CD4-positive, alpha-beta T cell (primary cell): ENCODE measurements at regions of chr18 and their contacts with region 1.

Region 1: DNA sequence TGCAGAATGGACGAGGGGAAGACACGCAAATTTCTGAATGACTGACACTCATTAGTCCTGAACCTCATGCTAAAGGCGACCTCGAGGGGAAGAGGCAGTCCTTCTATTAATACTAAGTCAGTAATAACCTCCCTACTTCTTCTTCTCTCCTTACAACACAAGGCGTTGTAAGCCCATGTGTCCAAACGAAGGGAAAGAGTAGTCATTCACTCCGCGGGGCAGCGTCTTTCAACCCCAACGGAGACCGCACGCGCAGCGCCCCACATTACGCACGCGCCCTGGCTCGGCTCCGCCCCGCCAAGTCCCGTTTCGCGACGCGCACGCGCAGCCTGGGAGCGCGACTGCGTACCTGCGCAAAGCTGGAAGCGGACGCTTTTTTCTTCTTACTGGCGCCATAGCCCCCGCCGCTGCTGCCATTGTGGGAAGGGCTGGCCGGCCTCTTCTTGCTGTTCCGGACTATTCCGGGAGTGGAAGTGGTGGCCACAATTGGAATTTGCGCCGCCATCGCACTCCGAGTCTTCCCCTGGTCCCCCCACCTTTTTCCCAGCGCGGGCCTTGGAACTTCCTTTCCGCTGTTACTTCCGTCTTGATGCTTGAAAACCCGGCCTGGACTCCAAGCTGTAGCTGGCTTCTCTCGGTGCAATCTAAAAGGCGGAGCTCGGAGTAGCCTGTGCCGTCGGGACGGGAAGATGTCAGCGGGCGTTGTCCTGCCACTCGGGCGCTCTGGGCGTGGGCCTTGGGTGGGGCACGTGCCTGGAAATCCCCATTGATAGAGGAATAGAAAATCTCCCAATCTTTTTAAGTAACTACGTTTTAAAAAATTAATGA is at the start of gene INO80C:
- DNase-seq: peak; percentile 83 to 98 (median 90)
- ATAC-seq: peak; percentile 88
- H3K4me3 ChIP-seq: peak within 1 kb of the TSS; percentile 85
- H3K4me3 Mint-ChIP-seq: peak within 1 kb of the TSS; percentile 98
- H3K27ac ChIP-seq: peak within 1 kb of the TSS; percentile 95 to 98
- H3K27ac Mint-ChIP-seq: peak within 1 kb of the TSS; percentile 99
- H3K4me1 ChIP-seq: peaks cover 17% of the 10 kb centered on the region
- H3K4me1 Mint-ChIP-seq: peaks cover 43% of the 10 kb centered on the region
- H3K27me3 ChIP-seq: no peaks in the 10 kb centered on the region
- H3K27me3 Mint-ChIP-seq: no peaks in the 10 kb centered on the region
- CTCF ChIP-seq: no peak
- total RNA-seq, gene INO80C: 13.0 to 16.0 TPM

Region 2: GRCh38 chr18:35040988-35041814 is 456.4 kb before region 1 on chr18 and contains the start of gene MAPRE2:
- CTCF ChIA-PET with region 1: no interaction called
- POLR2A ChIA-PET with region 1: interaction called, 9 read pairs
- intact Hi-C with region 1: loop called in 1 of 2 experiments (anchors 5 kb)
- DNase-seq: peak; percentile 98 to 100 (median 99)
- ATAC-seq: peak; percentile 76
- H3K4me3 ChIP-seq: peak within 1 kb of the TSS; percentile 94
- H3K4me3 Mint-ChIP-seq: peak within 1 kb of the TSS; percentile 90
- H3K27ac ChIP-seq: peak within 1 kb of the TSS; percentile 89 to 91
- H3K27ac Mint-ChIP-seq: peak within 1 kb of the TSS; percentile 95
- H3K4me1 ChIP-seq: peaks cover 27% of the 10 kb centered on the region
- H3K4me1 Mint-ChIP-seq: peaks cover 58% of the 10 kb centered on the region
- H3K27me3 ChIP-seq: no peaks in the 10 kb centered on the region
- H3K27me3 Mint-ChIP-seq: no peaks in the 10 kb centered on the region
- CTCF ChIP-seq: no peak
- total RNA-seq, gene MAPRE2: 108 to 112 TPM

Region 3: GRCh38 chr18:35290073-35290735 is 207.4 kb before region 1 on chr18 and contains the start of gene ZSCAN30:
- CTCF ChIA-PET with region 1: no interaction called
- POLR2A ChIA-PET with region 1: interaction called, 15 read pairs
- intact Hi-C with region 1: loop called in 1 of 2 experiments (anchors 2 kb)
- DNase-seq: peak; percentile 93 to 98 (median 96)
- ATAC-seq: peak; percentile 90
- H3K4me3 ChIP-seq: peak within 1 kb of the TSS; percentile 92
- H3K4me3 Mint-ChIP-seq: peak within 1 kb of the TSS; percentile 99
- H3K27ac ChIP-seq: peak within 1 kb of the TSS; percentile 55 to 87
- H3K27ac Mint-ChIP-seq: peak within 1 kb of the TSS; percentile 96
- H3K4me1 ChIP-seq: peaks cover 31% of the 10 kb centered on the region
- H3K4me1 Mint-ChIP-seq: peaks cover 78% of the 10 kb centered on the region
- H3K27me3 ChIP-seq: no peaks in the 10 kb centered on the region
- H3K27me3 Mint-ChIP-seq: no peaks in the 10 kb centered on the region
- CTCF ChIP-seq: no peak
- total RNA-seq, gene ZSCAN30: 9.6 to 11.6 TPM

Region 4: DNA sequence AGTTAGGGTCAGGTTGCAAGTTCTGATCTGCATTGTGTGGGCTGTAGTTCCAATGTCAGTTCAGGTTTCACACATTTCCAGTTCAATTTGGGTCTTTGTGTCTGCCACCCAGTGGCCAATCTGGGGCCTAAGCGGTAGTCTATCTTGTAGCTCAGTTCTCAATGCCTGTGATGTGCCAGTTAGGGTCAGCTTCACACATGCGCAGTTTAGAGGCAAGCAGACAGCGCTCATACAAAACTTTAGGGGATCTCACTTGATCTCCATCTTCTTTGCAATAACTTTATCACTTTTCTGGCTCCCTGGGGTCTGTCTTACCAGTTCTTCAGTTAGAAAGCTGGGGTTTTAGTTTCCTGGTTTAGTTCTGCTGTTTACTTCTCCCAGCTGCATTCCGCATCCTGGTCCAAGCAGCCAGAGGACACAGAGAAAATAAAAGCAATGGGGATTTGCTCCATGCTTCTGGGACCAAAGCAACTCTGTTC is 142.4 kb before region 1 on chr18:
- CTCF ChIA-PET with region 1: no interaction called
- POLR2A ChIA-PET with region 1: no interaction called
- intact Hi-C with region 1: no loop called
- DNase-seq: peak; percentile 39 to 85 (median 48)
- ATAC-seq: peak; percentile 95
- H3K4me3 ChIP-seq: no peak overlapping the region
- H3K4me3 Mint-ChIP-seq: no peak overlapping the region
- H3K27ac ChIP-seq: no peak overlapping the region
- H3K27ac Mint-ChIP-seq: no peak overlapping the region
- H3K4me1 ChIP-seq: no peaks in the 10 kb centered on the region
- H3K4me1 Mint-ChIP-seq: peaks cover 4% of the 10 kb centered on the region
- H3K27me3 ChIP-seq: no peaks in the 10 kb centered on the region
- H3K27me3 Mint-ChIP-seq: no peaks in the 10 kb centered on the region
- CTCF ChIP-seq: peak; percentile 68

Region 5: DNA sequence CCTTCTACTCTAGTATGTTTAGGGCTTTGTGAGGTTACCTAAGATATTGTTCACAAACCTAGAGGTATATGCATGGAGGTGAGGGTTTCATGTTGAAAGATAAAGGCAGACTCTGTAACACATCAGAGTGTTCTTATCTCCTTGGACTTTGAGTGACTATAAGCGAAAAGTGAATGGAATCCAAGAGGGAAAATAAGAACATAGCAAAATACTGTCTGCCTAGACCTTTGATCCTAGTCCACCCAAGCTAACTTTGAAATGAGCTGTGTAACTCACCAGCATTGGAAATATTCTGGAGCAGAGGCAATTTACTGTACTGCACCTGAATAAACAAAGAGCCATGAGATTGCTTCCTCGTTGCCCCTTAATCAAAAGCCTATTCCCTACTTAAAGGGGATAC is 55.7 kb after region 1 on chr18:
- CTCF ChIA-PET with region 1: no interaction called
- POLR2A ChIA-PET with region 1: no interaction called
- intact Hi-C with region 1: no loop called
- DNase-seq: no peak
- ATAC-seq: no peak
- H3K4me3 ChIP-seq: no peak overlapping the region
- H3K4me3 Mint-ChIP-seq: no peak overlapping the region
- H3K27ac ChIP-seq: no peak overlapping the region
- H3K27ac Mint-ChIP-seq: no peak overlapping the region
- H3K4me1 ChIP-seq: no peaks in the 10 kb centered on the region
- H3K4me1 Mint-ChIP-seq: no peaks in the 10 kb centered on the region
- H3K27me3 ChIP-seq: no peaks in the 10 kb centered on the region
- H3K27me3 Mint-ChIP-seq: peaks cover 6% of the 10 kb centered on the region
- CTCF ChIP-seq: no peak

Region 6: GRCh38 chr18:35972197-35973052 is 474.8 kb after region 1 on chr18 and contains the start of gene RMP24:
- CTCF ChIA-PET with region 1: no interaction called
- POLR2A ChIA-PET with region 1: interaction called, 15 read pairs
- intact Hi-C with region 1: loop called (anchors 2 to 5 kb)
- DNase-seq: peak; percentile 86 to 97 (median 92)
- ATAC-seq: peak; percentile 82
- H3K4me3 ChIP-seq: peak within 1 kb of the TSS; percentile 73
- H3K4me3 Mint-ChIP-seq: peak within 1 kb of the TSS; percentile 97
- H3K27ac ChIP-seq: peak within 1 kb of the TSS; percentile 84 to 88
- H3K27ac Mint-ChIP-seq: peak within 1 kb of the TSS; percentile 96
- H3K4me1 ChIP-seq: peaks cover 34% of the 10 kb centered on the region
- H3K4me1 Mint-ChIP-seq: peaks cover 72% of the 10 kb centered on the region
- H3K27me3 ChIP-seq: no peaks in the 10 kb centered on the region
- H3K27me3 Mint-ChIP-seq: no peaks in the 10 kb centered on the region
- CTCF ChIP-seq: no peak

Region 7: GRCh38 chr18:36129300-36130038 is 631.9 kb after region 1 on chr18 and contains the starts of genes ELP2 and SLC39A6:
- CTCF ChIA-PET with region 1: no interaction called
- POLR2A ChIA-PET with region 1: interaction called, 14 read pairs
- intact Hi-C with region 1: no loop called
- DNase-seq: peak; percentile 91 to 98 (median 94)
- ATAC-seq: peak; percentile 87
- H3K4me3 ChIP-seq: peak within 1 kb of the TSS; percentile 77
- H3K4me3 Mint-ChIP-seq: peak within 1 kb of the TSS; percentile 95
- H3K27ac ChIP-seq: peak within 1 kb of the TSS; percentile 99
- H3K27ac Mint-ChIP-seq: peak within 1 kb of the TSS; percentile 98
- H3K4me1 ChIP-seq: peaks cover 48% of the 10 kb centered on the region
- H3K4me1 Mint-ChIP-seq: peaks cover 75% of the 10 kb centered on the region
- H3K27me3 ChIP-seq: no peaks in the 10 kb centered on the region
- H3K27me3 Mint-ChIP-seq: no peaks in the 10 kb centered on the region
- CTCF ChIP-seq: peak; percentile 0
- total RNA-seq, gene ELP2: 200 to 206 TPM
- total RNA-seq, gene SLC39A6: 10.6 to 11.0 TPM